OCI-LY7 (cell line): ENCODE measurements at regions of chr19 and their contacts with region 1.

Region 1: GRCh38 chr19:18408053-18408476 is 10.6 kb upstream of the LRRC25 start:
- DNase-seq: peak; percentile 76
- H3K4me3 ChIP-seq: no peak overlapping the region
- H3K27ac ChIP-seq: no peak overlapping the region
- H3K4me1 ChIP-seq: peaks cover 26% of the 10 kb centered on the region
- CTCF ChIP-seq: peak; percentile 84

Region 2: GRCh38 chr19:18203863-18204393 is 204.1 kb before region 1 on chr19 and contains the start of gene RAB3A:
- CTCF ChIA-PET with region 1: no interaction called
- POLR2A ChIA-PET with region 1: no interaction called
- intact Hi-C with region 1: loop called (anchors 1 kb)
- DNase-seq: peak; percentile 100
- H3K4me3 ChIP-seq: peak within 1 kb of the TSS; percentile 87
- H3K27ac ChIP-seq: peak within 1 kb of the TSS; percentile 84
- H3K4me1 ChIP-seq: peaks cover 29% of the 10 kb centered on the region
- CTCF ChIP-seq: no peak
- total RNA-seq, gene RAB3A: 2.9 and 4.9 TPM in 2 replicates

Region 3: DNA sequence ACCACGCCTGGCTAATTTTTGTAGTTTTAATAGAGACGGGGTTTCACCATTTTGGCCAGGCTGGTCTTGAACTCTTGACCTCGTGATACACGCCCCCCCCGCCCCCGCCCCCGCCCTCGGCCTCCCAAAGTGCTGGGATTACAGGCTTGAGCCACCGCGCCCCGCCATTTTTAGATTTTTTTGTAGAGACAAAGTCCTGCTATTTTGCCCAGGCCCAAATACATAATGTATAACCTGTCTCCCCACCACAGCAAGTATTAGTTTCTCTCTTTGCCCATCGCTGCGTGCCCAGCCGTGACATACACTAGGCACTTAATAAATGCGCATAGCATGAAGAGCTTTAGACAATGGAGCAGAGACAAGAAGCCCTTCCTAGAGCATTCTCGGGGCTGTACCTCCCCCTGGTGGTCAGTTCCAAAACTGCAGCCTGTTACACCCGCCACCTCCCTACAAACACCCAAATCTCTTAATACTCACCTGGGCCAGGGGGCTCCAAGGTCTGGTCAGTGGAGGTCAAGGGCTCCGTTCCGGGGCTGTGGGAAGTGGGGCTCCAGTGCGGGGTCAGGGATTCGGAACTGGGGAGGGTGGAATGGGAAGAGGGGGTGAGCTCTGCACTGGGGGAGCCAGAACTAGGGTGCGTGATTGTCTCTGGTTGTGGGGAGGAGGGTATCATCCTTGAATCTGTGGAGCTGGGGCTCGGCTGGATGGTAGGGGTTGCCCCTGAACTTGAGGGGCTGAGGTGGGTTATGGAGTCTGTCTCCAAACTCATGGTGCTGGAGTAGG is 156.3 kb before region 1 on chr19:
- CTCF ChIA-PET with region 1: no interaction called
- POLR2A ChIA-PET with region 1: no interaction called
- intact Hi-C with region 1: no loop called
- DNase-seq: peak; percentile 74
- H3K4me3 ChIP-seq: no peak overlapping the region
- H3K27ac ChIP-seq: no peak overlapping the region
- H3K4me1 ChIP-seq: peaks cover 24% of the 10 kb centered on the region
- CTCF ChIP-seq: peak; percentile 99

Region 4: DNA sequence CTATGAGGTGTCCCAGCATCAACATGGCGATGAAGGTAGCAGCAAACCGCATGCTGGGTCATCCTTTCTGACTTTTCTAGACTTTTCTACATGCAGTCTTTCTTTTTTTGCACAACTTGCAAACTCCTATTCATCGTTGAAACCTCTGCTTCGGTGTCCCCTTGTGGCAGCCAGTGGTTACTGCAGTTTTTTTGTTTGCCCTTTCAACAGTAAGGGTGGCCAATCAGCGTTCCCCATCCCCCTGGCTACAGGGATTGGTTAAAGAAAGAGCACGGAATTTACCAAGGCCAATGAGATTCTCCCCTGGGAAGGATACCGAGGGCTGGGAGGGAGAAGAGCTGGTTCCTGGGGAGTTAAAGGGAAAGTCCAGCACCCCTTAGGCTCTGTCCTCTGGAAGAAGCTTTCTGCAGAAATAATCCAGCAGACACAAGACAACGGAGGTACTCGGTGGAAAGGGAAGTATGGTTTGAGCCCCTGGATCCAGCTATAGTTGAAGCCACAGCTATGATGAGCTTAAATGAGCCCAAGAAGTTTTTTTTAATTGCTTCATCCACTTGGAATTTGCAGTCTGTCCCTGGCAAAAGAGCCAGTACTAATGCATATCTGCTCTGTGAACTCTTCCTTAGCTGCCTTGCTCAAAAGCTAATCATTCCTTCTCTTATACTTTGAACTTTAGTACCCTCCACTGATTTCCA is 79.6 kb before region 1 on chr19:
- CTCF ChIA-PET with region 1: no interaction called
- POLR2A ChIA-PET with region 1: interaction called, 4 read pairs
- intact Hi-C with region 1: loop called (anchors 1 kb)
- DNase-seq: peak; percentile 94
- H3K4me3 ChIP-seq: peak overlapping the region; percentile 56
- H3K27ac ChIP-seq: no peak overlapping the region
- H3K4me1 ChIP-seq: peaks cover 32% of the 10 kb centered on the region
- CTCF ChIP-seq: peak; percentile 90

Region 5: GRCh38 chr19:18388100-18388959 is 19.7 kb before region 1 on chr19:
- CTCF ChIA-PET with region 1: interaction called, 4 read pairs
- POLR2A ChIA-PET with region 1: interaction called, 9 read pairs
- intact Hi-C with region 1: loop called (anchors 1 kb)
- DNase-seq: peak; percentile 87
- H3K4me3 ChIP-seq: peak overlapping the region; percentile 53
- H3K27ac ChIP-seq: no peak overlapping the region
- H3K4me1 ChIP-seq: peaks cover 14% of the 10 kb centered on the region
- CTCF ChIP-seq: peak; percentile 91